Heart right ventricle (tissue), 16 donors: ENCODE measurements at regions of chr1 and their contacts with region 1.

Region 1: GRCh38 chr1:151459331-151460046 is at the start of gene POGZ:
- DNase-seq: peak; percentile 97 to 99
- ATAC-seq: peak; percentile 94 to 99 (median 97)
- H3K4me3 ChIP-seq: peak within 1 kb of the TSS; percentile 54 to 84 (median 74)
- H3K27ac ChIP-seq: peak within 1 kb of the TSS; percentile 93 to 99 (median 96)
- H3K4me1 ChIP-seq: peaks cover 9 to 40% (median 32%) of the 10 kb centered on the region in 9 donors
- H3K27me3 ChIP-seq: peaks cover 0 to 7% (median 0%) of the 10 kb centered on the region in 7 donors
- CTCF ChIP-seq: no peak
- total RNA-seq, gene POGZ: 36.7 to 58.6 (median 48.9) TPM

Region 2: GRCh38 chr1:151472856-151473731 is 13.6 kb after region 1 on chr1:
- intact Hi-C with region 1: loop called in 5 of 10 experiments (anchors 1 to 2 kb)
- DNase-seq: peak; percentile 48 to 62
- ATAC-seq: peak; percentile 81 to 91 (median 88)
- H3K4me3 ChIP-seq: peak overlapping the region; percentile 50 to 79 (median 64)
- H3K27ac ChIP-seq: peak overlapping the region in 9 of 10 donors; percentile 57 to 90 (median 78)
- H3K4me1 ChIP-seq: peaks cover 0 to 13% (median 6%) of the 10 kb centered on the region in 9 donors
- H3K27me3 ChIP-seq: no peaks in the 10 kb centered on the region
- CTCF ChIP-seq: no peak

Region 3: GRCh38 chr1:151635479-151636072 is 176.1 kb after region 1 on chr1:
- intact Hi-C with region 1: no loop called
- DNase-seq: no peak
- ATAC-seq: no peak
- H3K4me3 ChIP-seq: no peak overlapping the region
- H3K27ac ChIP-seq: no peak overlapping the region
- H3K4me1 ChIP-seq: peaks cover 5 to 41% (median 27%) of the 10 kb centered on the region in 9 donors
- H3K27me3 ChIP-seq: no peaks in the 10 kb centered on the region
- CTCF ChIP-seq: no peak